ENCODE measurements at regions of chr6 and their contacts with region 1.

Region 1: GRCh38 chr6:33014841-33015634 is 5.6 kb upstream of the HLA-DOA start:
- DNase-seq: peak; percentile 83
- ATAC-seq: peak; percentile 74
- H3K4me3 ChIP-seq: no peak overlapping the region
- H3K27ac ChIP-seq: no peak overlapping the region
- H3K4me1 ChIP-seq: no peaks in the 10 kb centered on the region
- H3K27me3 ChIP-seq: peaks cover 83% of the 10 kb centered on the region
- CTCF ChIP-seq: peak; percentile 82

Region 2: DNA sequence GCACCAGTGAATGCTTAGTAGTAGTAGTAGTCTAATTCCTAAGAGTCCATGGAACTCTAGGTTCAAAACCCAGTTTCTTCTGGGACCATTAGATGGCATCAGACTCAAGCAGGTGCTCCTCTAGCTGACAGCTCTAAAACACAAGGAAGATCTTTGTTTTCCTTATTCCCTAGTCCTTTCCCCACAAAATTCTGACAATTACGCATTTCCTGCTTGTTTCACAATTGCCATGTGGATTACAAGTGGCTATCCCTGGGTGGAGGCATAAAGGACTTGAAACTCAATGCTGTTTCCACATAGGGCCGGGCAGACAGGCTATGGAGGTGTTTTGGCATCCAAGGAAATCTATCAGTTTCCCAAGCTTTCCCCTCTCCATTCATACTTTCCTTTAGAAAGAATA is 189.1 kb before region 1 on chr6:
- CTCF ChIA-PET with region 1: interaction called, 10 read pairs
- POLR2A ChIA-PET with region 1: no interaction called
- intact Hi-C with region 1: no loop called
- DNase-seq: peak; percentile 54
- ATAC-seq: peak; percentile 77
- H3K4me3 ChIP-seq: no peak overlapping the region
- H3K27ac ChIP-seq: no peak overlapping the region
- H3K4me1 ChIP-seq: no peaks in the 10 kb centered on the region
- H3K27me3 ChIP-seq: no peaks in the 10 kb centered on the region
- CTCF ChIP-seq: peak; percentile 60

Region 3: GRCh38 chr6:33091957-33092356 is 76.9 kb after region 1 on chr6:
- CTCF ChIA-PET with region 1: no interaction called
- POLR2A ChIA-PET with region 1: no interaction called
- intact Hi-C with region 1: loop called (anchors 2 kb)
- DNase-seq: peak; percentile 9
- ATAC-seq: peak; percentile 37; the same call in 1 of the 2 replicates
- H3K4me3 ChIP-seq: no peak overlapping the region
- H3K27ac ChIP-seq: no peak overlapping the region
- H3K4me1 ChIP-seq: 0 out of 2 replicates have a peak, but pooled peaks cover 4% of the 10 kb centered on the region
- H3K27me3 ChIP-seq: peaks cover 28% of the 10 kb centered on the region
- CTCF ChIP-seq: peak; percentile 67

Region 4: GRCh38 chr6:33147807-33148666 is 133.0 kb after region 1 on chr6:
- CTCF ChIA-PET with region 1: no interaction called
- POLR2A ChIA-PET with region 1: no interaction called
- intact Hi-C with region 1: loop called (anchors 1 kb)
- DNase-seq: peak; percentile 63
- ATAC-seq: no peak; the same call in 1 of the 2 replicates
- H3K4me3 ChIP-seq: no peak overlapping the region
- H3K27ac ChIP-seq: no peak overlapping the region
- H3K4me1 ChIP-seq: no peaks in the 10 kb centered on the region
- H3K27me3 ChIP-seq: peaks cover 21% of the 10 kb centered on the region
- CTCF ChIP-seq: peak; percentile 81

Measured in PC-3 (cell line).